ENCODE measurements at regions of chr12 and their contacts with region 1.

Region 1: DNA sequence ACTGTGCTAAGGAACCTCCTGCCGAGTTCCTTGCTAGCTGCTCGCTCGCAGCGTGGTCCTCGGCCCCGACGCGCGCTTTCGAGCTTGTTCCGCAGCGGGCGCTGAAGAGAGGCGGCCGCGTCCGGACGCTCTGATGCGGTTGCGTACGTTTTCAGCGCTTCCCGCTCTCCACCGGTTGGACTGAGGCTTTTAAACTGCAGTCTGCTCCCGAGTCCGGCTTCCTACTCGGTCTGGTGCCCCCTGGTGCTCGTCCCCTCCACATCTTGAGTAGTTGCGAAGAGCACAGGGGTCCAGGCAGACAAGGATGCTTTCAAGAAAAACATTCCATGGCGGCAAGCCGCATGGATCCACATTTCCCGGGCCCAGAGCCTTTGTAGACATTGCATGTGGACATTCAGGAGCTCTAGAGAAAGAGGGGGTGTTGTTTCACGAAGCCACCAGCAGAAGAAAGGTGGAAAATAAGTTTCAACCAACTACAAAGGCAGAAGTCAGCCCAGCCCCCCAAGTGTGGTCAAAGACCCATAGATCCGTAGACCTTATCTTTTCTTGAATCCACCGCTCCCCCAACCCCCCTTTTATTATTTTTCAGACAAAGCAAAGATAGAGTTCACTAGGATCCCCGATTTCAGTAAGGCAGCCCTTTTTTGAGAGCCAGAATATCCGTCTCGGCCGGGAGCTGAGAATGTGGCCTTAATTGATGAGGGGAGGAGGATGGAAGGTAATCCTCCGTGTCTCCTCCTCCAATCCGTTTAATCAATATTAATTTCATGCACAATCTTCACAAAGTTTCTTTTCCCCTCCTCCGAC is 984 bp upstream of the WNK1 start:
- DNase-seq: peak; percentile 83
- H3K4me3 Mint-ChIP-seq: no peak overlapping the region
- H3K27ac Mint-ChIP-seq: no peak overlapping the region
- H3K4me1 Mint-ChIP-seq: peaks cover 17% of the 10 kb centered on the region
- H3K27me3 Mint-ChIP-seq: no peaks in the 10 kb centered on the region

Region 2: GRCh38 chr12:538731-539539 is 212.5 kb before region 1 on chr12:
- intact Hi-C with region 1: no loop called
- DNase-seq: peak; percentile 28
- H3K4me3 Mint-ChIP-seq: no peak overlapping the region
- H3K27ac Mint-ChIP-seq: peak overlapping the region; percentile 80
- H3K4me1 Mint-ChIP-seq: peaks cover 17% of the 10 kb centered on the region
- H3K27me3 Mint-ChIP-seq: peaks cover 2% of the 10 kb centered on the region

Region 3: GRCh38 chr12:569803-570434 is 181.5 kb before region 1 on chr12:
- intact Hi-C with region 1: loop called (anchors 1 kb)
- DNase-seq: peak; percentile 82
- H3K4me3 Mint-ChIP-seq: peak overlapping the region; percentile 79
- H3K27ac Mint-ChIP-seq: peak overlapping the region; percentile 36
- H3K4me1 Mint-ChIP-seq: peaks cover 44% of the 10 kb centered on the region
- H3K27me3 Mint-ChIP-seq: no peaks in the 10 kb centered on the region

Region 4: DNA sequence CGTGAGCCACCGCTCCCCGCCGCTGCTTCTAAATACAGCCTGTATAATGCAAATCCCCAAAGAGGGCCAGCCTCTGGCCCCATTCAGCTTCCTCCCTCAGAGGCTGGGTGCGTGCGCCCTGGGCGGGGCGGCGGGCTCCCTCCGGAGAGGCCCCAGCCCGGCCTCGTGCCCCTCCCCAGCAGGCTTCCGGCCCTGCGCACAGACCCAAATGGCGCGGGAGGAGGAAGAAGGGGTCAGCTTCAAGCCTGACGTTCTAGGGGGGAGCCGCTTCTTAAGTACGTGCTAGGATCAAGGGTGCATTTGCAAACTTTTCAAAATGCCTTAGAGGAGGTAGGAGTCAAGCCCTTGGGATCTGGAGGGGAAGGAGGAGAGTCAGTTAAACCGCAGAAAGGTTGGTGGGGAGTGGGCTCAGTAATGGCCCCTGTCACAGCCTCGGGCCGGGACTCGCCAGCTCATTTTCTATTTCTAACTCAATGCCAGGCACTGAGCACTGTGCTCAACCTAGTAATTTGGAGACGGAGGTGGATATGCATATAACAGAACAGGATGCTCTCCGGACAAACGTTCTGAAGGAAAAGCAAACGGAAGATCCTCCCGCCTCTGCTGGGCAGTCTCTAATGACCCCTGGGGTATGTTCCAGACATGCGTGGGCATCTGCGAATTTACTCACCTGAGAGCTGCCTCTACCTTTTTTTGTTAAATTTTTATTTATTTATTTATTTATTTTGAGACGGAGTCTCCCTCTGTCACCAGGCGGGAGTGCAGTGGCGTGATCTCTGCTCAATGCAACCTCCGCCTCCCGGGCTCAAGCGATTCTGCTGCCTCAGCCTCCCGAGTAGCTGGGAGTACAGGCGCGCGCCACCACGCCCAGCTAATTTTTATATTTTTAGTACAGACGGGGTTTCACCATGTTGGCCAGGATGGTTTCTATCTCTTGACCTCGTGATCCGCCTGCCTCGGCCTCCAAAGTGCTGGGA is 120.5 kb before region 1 on chr12:
- intact Hi-C with region 1: loop called (anchors 1 kb)
- DNase-seq: peak; percentile 84
- H3K4me3 Mint-ChIP-seq: peak overlapping the region; percentile 96
- H3K27ac Mint-ChIP-seq: peak overlapping the region; percentile 98
- H3K4me1 Mint-ChIP-seq: peaks cover 45% of the 10 kb centered on the region
- H3K27me3 Mint-ChIP-seq: no peaks in the 10 kb centered on the region

Region 5: GRCh38 chr12:674272-674781 is 77.1 kb before region 1 on chr12:
- intact Hi-C with region 1: loop called (anchors 1 kb)
- DNase-seq: peak; percentile 73
- H3K4me3 Mint-ChIP-seq: peak overlapping the region; percentile 72
- H3K27ac Mint-ChIP-seq: peak overlapping the region; percentile 89
- H3K4me1 Mint-ChIP-seq: peaks cover 74% of the 10 kb centered on the region
- H3K27me3 Mint-ChIP-seq: no peaks in the 10 kb centered on the region

Region 6: DNA sequence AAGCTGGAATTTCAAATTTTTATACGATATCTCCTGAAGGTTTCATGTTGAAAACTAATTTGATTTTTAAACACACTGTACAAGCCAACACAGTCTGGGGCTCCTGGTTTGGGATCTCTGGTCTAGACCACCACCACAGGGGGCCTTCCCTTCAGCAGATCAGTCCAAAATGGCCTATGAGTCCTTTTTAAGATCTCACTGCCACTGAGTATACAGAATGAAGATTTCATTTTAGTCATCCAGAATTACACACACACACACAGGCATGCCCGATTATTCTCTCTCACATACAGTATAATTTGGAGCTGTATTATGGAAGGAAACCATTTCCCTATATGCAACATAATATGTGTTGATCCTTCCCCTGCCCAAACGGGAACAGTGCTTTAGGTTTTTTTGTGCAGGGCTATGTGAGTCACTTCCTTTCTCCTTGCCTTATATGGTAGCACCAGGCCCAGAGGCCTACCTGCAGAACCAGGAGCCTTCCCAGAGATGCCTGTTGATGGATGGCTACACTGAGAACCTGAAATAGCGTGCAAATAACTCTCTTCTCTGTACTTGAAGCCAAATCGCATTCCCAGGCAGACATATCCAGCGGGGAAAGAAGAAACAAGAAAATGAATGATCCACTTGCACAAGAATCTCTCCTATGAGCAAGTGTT is 27.1 kb before region 1 on chr12:
- intact Hi-C with region 1: loop called (anchors 1 kb)
- DNase-seq: no peak
- H3K4me3 Mint-ChIP-seq: no peak overlapping the region
- H3K27ac Mint-ChIP-seq: peak overlapping the region; percentile 30
- H3K4me1 Mint-ChIP-seq: peaks cover 75% of the 10 kb centered on the region
- H3K27me3 Mint-ChIP-seq: no peaks in the 10 kb centered on the region

Region 7: DNA sequence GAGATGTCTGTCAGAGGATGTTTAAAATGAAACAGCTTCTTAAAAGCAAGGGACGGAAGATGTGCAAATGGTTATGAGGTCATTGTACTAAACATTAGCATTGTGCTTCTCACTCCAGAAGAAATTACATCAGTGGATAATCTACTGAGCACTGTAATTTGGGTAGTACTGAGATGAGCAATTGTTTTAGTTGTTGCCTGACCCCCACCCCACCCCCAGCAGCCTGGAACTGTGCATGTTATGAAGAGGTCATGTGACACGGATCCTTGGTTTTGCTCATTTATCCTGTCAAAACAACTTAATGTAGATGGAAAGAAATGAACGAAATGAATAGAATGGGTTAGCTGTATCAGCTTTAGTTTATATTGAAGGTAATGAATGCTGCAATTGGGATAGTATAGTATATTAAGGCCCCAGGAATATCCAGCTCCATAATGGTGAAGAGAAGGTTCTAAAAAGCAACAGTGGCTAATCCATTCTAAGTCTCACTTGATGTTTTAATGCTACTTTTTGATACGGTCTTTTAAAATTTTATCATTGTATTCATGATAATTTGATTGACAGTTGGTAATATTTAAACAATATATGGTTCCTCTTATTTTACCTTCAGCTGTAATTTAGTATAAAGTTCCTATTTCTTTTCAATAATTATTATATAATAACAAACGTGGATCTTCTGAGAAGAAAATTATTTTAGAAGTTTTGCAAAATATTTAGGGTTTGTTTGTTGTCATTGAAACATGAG is 59.4 kb after region 1 on chr12:
- intact Hi-C with region 1: loop called (anchors 1 kb)
- DNase-seq: no peak
- H3K4me3 Mint-ChIP-seq: peak overlapping the region; percentile 20
- H3K27ac Mint-ChIP-seq: peak overlapping the region; percentile 75
- H3K4me1 Mint-ChIP-seq: peaks cover 68% of the 10 kb centered on the region
- H3K27me3 Mint-ChIP-seq: no peaks in the 10 kb centered on the region

Region 8: GRCh38 chr12:1594261-1595025 is 843.0 kb after region 1 on chr12 and contains the start of gene FBXL14:
- intact Hi-C with region 1: loop called (anchors 5 kb)
- DNase-seq: peak; percentile 88
- H3K4me3 Mint-ChIP-seq: peak within 1 kb of the TSS; percentile 99
- H3K27ac Mint-ChIP-seq: peak within 1 kb of the TSS; percentile 94
- H3K4me1 Mint-ChIP-seq: peaks cover 48% of the 10 kb centered on the region
- H3K27me3 Mint-ChIP-seq: no peaks in the 10 kb centered on the region
- total RNA-seq, gene FBXL14: 19.4 and 20.4 TPM in 2 replicates